CD4-positive, alpha-beta memory T cell (primary cell): ENCODE measurements at regions of chr14 and their contacts with region 1.

Region 1: GRCh38 chr14:89720741-89721315 is 233.7 kb downstream of the EFCAB11 start:
- DNase-seq: peak; percentile 85 to 88 (median 86)
- H3K4me3 ChIP-seq: peak overlapping the region in 1 of 2 donors; percentile 39
- H3K4me3 Mint-ChIP-seq: peak overlapping the region; percentile 49 to 82 (median 77)
- H3K27ac ChIP-seq: peak overlapping the region; percentile 67
- H3K27ac Mint-ChIP-seq: peak overlapping the region; percentile 87 to 98 (median 95)
- H3K4me1 ChIP-seq: peaks cover 83% of the 10 kb centered on the region
- H3K4me1 Mint-ChIP-seq: peaks cover 68 to 87% (median 77%) of the 10 kb centered on the region in 4 donors
- H3K27me3 ChIP-seq: no peaks in the 10 kb centered on the region
- H3K27me3 Mint-ChIP-seq: no peaks in the 10 kb centered on the region

Region 2: DNA sequence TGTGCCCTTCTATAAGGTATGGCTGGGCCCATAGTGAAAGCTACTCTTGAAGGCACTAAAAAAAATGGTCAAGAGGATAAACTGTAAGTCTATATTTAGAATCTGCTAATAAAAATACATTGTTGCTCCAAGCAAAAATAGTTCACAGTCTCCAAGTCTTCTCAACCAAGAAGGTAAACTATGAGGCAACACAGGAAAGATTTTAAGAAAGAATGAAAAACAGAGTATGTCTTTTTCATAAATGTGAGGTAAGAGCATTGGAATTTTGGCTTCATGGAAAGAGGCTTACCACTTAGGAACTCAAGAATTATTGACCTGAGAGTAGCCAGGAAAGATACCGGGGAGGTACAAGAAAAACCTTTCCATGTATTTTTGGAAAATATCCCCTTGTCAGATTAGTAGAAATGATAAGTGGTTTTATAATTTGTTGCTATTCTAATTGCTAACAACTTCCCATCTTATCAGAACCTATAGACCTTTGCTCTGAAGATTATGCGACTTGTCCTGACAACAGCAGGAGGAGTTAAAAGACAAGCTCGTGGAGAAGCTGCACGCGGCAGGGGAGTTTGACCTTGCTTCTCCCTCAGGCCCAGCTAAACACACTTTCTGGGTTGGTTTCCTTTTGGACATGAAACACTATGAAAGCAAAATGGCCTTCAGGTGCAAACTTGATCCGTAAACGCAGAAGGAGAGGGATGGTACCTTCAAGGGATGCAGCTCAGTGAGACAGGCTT is 541.9 kb before region 1 on chr14:
- CTCF ChIA-PET with region 1: interaction called, 8 read pairs
- POLR2A ChIA-PET with region 1: no interaction called
- intact Hi-C with region 1: loop called (anchors 5 kb)
- DNase-seq: no peak
- H3K4me3 ChIP-seq: no peak overlapping the region
- H3K4me3 Mint-ChIP-seq: no peak overlapping the region
- H3K27ac ChIP-seq: no peak overlapping the region
- H3K27ac Mint-ChIP-seq: peak overlapping the region in 2 of 7 donors; percentile 25 to 38
- H3K4me1 ChIP-seq: peaks cover 5% of the 10 kb centered on the region
- H3K4me1 Mint-ChIP-seq: peaks cover 10 to 32% (median 23%) of the 10 kb centered on the region in 4 donors
- H3K27me3 ChIP-seq: no peaks in the 10 kb centered on the region
- H3K27me3 Mint-ChIP-seq: no peaks in the 10 kb centered on the region

Region 3: GRCh38 chr14:89509891-89510290 is 210.9 kb before region 1 on chr14:
- CTCF ChIA-PET with region 1: interaction called, 3 read pairs
- POLR2A ChIA-PET with region 1: interaction called, 13 read pairs
- intact Hi-C with region 1: no loop called
- DNase-seq: no peak
- H3K4me3 ChIP-seq: no peak overlapping the region
- H3K4me3 Mint-ChIP-seq: peak overlapping the region in 7 of 8 donors; percentile 84 to 92 (median 89)
- H3K27ac ChIP-seq: peak overlapping the region; percentile 46
- H3K27ac Mint-ChIP-seq: peak overlapping the region; percentile 88 to 98 (median 96)
- H3K4me1 ChIP-seq: peaks cover 37% of the 10 kb centered on the region
- H3K4me1 Mint-ChIP-seq: peaks cover 38 to 70% (median 52%) of the 10 kb centered on the region in 4 donors
- H3K27me3 ChIP-seq: no peaks in the 10 kb centered on the region
- H3K27me3 Mint-ChIP-seq: no peaks in the 10 kb centered on the region

Region 4: DNA sequence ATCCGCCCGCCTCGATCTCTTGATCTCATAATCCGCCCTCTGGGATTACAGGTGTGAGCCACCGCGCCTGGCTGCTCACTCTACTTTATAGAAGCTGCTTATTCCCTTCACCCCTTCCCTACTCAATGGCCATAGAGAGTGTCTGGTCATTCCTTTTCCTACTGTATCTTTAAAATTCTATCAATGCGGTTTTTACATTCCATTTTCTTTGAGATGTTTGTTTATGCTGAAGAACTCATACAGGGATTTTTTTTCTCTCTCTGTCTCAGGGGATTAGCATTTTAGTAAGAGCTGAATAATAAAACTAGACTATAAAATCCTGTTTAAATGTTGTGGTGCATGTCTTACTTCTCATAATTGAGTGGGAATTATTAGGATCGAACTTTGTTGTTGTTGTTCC is 85.2 kb before region 1 on chr14:
- CTCF ChIA-PET with region 1: interaction called, 11 read pairs
- POLR2A ChIA-PET with region 1: no interaction called
- intact Hi-C with region 1: loop called (anchors 5 kb)
- DNase-seq: no peak
- H3K4me3 ChIP-seq: no peak overlapping the region
- H3K4me3 Mint-ChIP-seq: no peak overlapping the region
- H3K27ac ChIP-seq: no peak overlapping the region
- H3K27ac Mint-ChIP-seq: no peak overlapping the region
- H3K4me1 ChIP-seq: peaks cover 28% of the 10 kb centered on the region
- H3K4me1 Mint-ChIP-seq: peaks cover 18 to 44% (median 35%) of the 10 kb centered on the region in 4 donors
- H3K27me3 ChIP-seq: no peaks in the 10 kb centered on the region
- H3K27me3 Mint-ChIP-seq: no peaks in the 10 kb centered on the region

Region 5: GRCh38 chr14:89681086-89682018 is 39.5 kb before region 1 on chr14:
- CTCF ChIA-PET with region 1: interaction called, 6 read pairs
- POLR2A ChIA-PET with region 1: interaction called, 17 read pairs
- intact Hi-C with region 1: no loop called
- DNase-seq: peak in 3 of 5 donors; percentile 15 to 51 (median 16)
- H3K4me3 ChIP-seq: peak overlapping the region; percentile 24 to 35
- H3K4me3 Mint-ChIP-seq: peak overlapping the region; percentile 65 to 87 (median 76)
- H3K27ac ChIP-seq: peak overlapping the region; percentile 33
- H3K27ac Mint-ChIP-seq: peak overlapping the region; percentile 79 to 95 (median 93)
- H3K4me1 ChIP-seq: peaks cover 35% of the 10 kb centered on the region
- H3K4me1 Mint-ChIP-seq: peaks cover 26 to 49% (median 32%) of the 10 kb centered on the region in 4 donors
- H3K27me3 ChIP-seq: no peaks in the 10 kb centered on the region
- H3K27me3 Mint-ChIP-seq: no peaks in the 10 kb centered on the region

Region 6: DNA sequence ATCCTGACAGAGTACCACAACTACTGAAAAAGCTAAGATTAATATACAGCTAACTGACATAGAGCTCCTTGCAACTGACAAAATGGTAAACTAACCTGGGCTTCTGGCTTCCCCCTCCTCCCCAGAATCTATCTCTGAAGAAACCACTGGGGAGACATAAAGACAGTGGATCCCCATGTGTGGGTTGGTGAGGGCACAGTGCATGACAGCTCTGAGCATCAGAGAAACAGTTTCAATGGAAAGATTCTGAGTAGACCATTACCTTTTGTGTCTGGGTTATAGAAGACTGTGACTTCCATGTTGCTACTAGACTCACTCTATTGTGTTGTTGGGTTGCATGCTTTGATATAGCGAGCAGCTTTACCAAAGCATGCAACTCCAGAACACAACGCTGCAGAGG is 13.7 kb before region 1 on chr14:
- CTCF ChIA-PET with region 1: interaction called, 10 read pairs
- POLR2A ChIA-PET with region 1: interaction called, 37 read pairs
- intact Hi-C with region 1: no loop called
- DNase-seq: no peak
- H3K4me3 ChIP-seq: no peak overlapping the region
- H3K4me3 Mint-ChIP-seq: no peak overlapping the region
- H3K27ac ChIP-seq: no peak overlapping the region
- H3K27ac Mint-ChIP-seq: no peak overlapping the region
- H3K4me1 ChIP-seq: peaks cover 14% of the 10 kb centered on the region
- H3K4me1 Mint-ChIP-seq: peaks cover 16 to 23% (median 19%) of the 10 kb centered on the region in 4 donors
- H3K27me3 ChIP-seq: no peaks in the 10 kb centered on the region
- H3K27me3 Mint-ChIP-seq: no peaks in the 10 kb centered on the region

Region 7: GRCh38 chr14:89773644-89774316 is 53.0 kb after region 1 on chr14:
- CTCF ChIA-PET with region 1: interaction called, 32 read pairs
- POLR2A ChIA-PET with region 1: interaction called, 10 read pairs
- intact Hi-C with region 1: no loop called
- DNase-seq: peak; percentile 46 to 56 (median 49)
- H3K4me3 ChIP-seq: peak overlapping the region in 1 of 2 donors; percentile 40
- H3K4me3 Mint-ChIP-seq: peak overlapping the region in 7 of 8 donors; percentile 62 to 81 (median 67)
- H3K27ac ChIP-seq: no peak overlapping the region
- H3K27ac Mint-ChIP-seq: peak overlapping the region in 6 of 7 donors; percentile 7 to 85 (median 62)
- H3K4me1 ChIP-seq: peaks cover 16% of the 10 kb centered on the region
- H3K4me1 Mint-ChIP-seq: peaks cover 10 to 23% (median 16%) of the 10 kb centered on the region in 4 donors
- H3K27me3 ChIP-seq: no peaks in the 10 kb centered on the region
- H3K27me3 Mint-ChIP-seq: peaks cover 0 to 2% of the 10 kb centered on the region in 2 donors